ENCODE measurements at regions of chr16 and their contacts with region 1.

Region 1: GRCh38 chr16:3880623-3881498 is at the start of gene CREBBP:
- DNase-seq: peak; percentile 95
- ATAC-seq: peak; percentile 84
- H3K4me3 ChIP-seq: peak within 1 kb of the TSS; percentile 70 to 94 (median 74)
- H3K4me3 Mint-ChIP-seq: peak within 1 kb of the TSS; percentile 97
- H3K27ac ChIP-seq: peak within 1 kb of the TSS; percentile 50 to 81
- H3K27ac Mint-ChIP-seq: peak within 1 kb of the TSS; percentile 94
- H3K4me1 ChIP-seq: peaks cover 29 to 34% of the 10 kb centered on the region in 2 donors
- H3K4me1 Mint-ChIP-seq: peaks cover 36% of the 10 kb centered on the region
- H3K27me3 ChIP-seq: no peaks in the 10 kb centered on the region
- H3K27me3 Mint-ChIP-seq: peaks cover 6% of the 10 kb centered on the region
- CTCF ChIP-seq: no peak
- total RNA-seq, gene CREBBP: 205 and 206 TPM in 2 replicates

Region 2: GRCh38 chr16:3282730-3283524 is 597.9 kb before region 1 on chr16 and contains the start of gene ZNF263:
- CTCF ChIA-PET with region 1: no interaction called
- POLR2A ChIA-PET with region 1: no interaction called
- intact Hi-C with region 1: loop called (anchors 2 kb)
- DNase-seq: peak; percentile 96
- ATAC-seq: peak; percentile 89
- H3K4me3 ChIP-seq: peak within 1 kb of the TSS; percentile 78 to 100 (median 95)
- H3K4me3 Mint-ChIP-seq: peak within 1 kb of the TSS; percentile 97
- H3K27ac ChIP-seq: peak within 1 kb of the TSS; percentile 97 to 99
- H3K27ac Mint-ChIP-seq: peak within 1 kb of the TSS; percentile 98
- H3K4me1 ChIP-seq: peaks cover 22 to 30% of the 10 kb centered on the region in 2 donors
- H3K4me1 Mint-ChIP-seq: peaks cover 37% of the 10 kb centered on the region
- H3K27me3 ChIP-seq: no peaks in the 10 kb centered on the region
- H3K27me3 Mint-ChIP-seq: no peaks in the 10 kb centered on the region
- CTCF ChIP-seq: no peak
- total RNA-seq, gene ZNF263: 43.0 and 46.0 TPM in 2 replicates

Region 3: GRCh38 chr16:3520413-3520812 is 360.4 kb before region 1 on chr16:
- CTCF ChIA-PET with region 1: no interaction called
- POLR2A ChIA-PET with region 1: no interaction called
- intact Hi-C with region 1: loop called (anchors 10 kb)
- DNase-seq: no peak
- ATAC-seq: no peak
- H3K4me3 ChIP-seq: no peak overlapping the region
- H3K4me3 Mint-ChIP-seq: no peak overlapping the region
- H3K27ac ChIP-seq: no peak overlapping the region
- H3K27ac Mint-ChIP-seq: no peak overlapping the region
- H3K4me1 ChIP-seq: no peaks in the 10 kb centered on the region
- H3K4me1 Mint-ChIP-seq: no peaks in the 10 kb centered on the region
- H3K27me3 ChIP-seq: no peaks in the 10 kb centered on the region
- H3K27me3 Mint-ChIP-seq: no peaks in the 10 kb centered on the region
- CTCF ChIP-seq: no peak

Region 4: GRCh38 chr16:3690470-3690928 is 190.4 kb before region 1 on chr16:
- CTCF ChIA-PET with region 1: interaction called, 14 read pairs
- POLR2A ChIA-PET with region 1: interaction called, 4 read pairs
- intact Hi-C with region 1: loop called (anchors 1 kb)
- DNase-seq: peak; percentile 86
- ATAC-seq: peak; percentile 98
- H3K4me3 ChIP-seq: no peak overlapping the region
- H3K4me3 Mint-ChIP-seq: no peak overlapping the region
- H3K27ac ChIP-seq: no peak overlapping the region
- H3K27ac Mint-ChIP-seq: peak overlapping the region; percentile 50
- H3K4me1 ChIP-seq: peaks cover 3 to 9% of the 10 kb centered on the region in 2 donors
- H3K4me1 Mint-ChIP-seq: peaks cover 7% of the 10 kb centered on the region
- H3K27me3 ChIP-seq: no peaks in the 10 kb centered on the region
- H3K27me3 Mint-ChIP-seq: no peaks in the 10 kb centered on the region
- CTCF ChIP-seq: peak; percentile 96

Region 5: GRCh38 chr16:3717235-3718018 is 163.4 kb before region 1 on chr16 and contains the start of gene TRAP1:
- CTCF ChIA-PET with region 1: no interaction called
- POLR2A ChIA-PET with region 1: no interaction called
- intact Hi-C with region 1: loop called (anchors 1 kb)
- DNase-seq: peak; percentile 93
- ATAC-seq: peak; percentile 97
- H3K4me3 ChIP-seq: peak within 1 kb of the TSS; percentile 58 to 98 (median 90)
- H3K4me3 Mint-ChIP-seq: peak within 1 kb of the TSS; percentile 91
- H3K27ac ChIP-seq: peak within 1 kb of the TSS; percentile 69 to 91
- H3K27ac Mint-ChIP-seq: peak within 1 kb of the TSS; percentile 87
- H3K4me1 ChIP-seq: peaks cover 11 to 14% of the 10 kb centered on the region in 2 donors
- H3K4me1 Mint-ChIP-seq: peaks cover 15% of the 10 kb centered on the region
- H3K27me3 ChIP-seq: no peaks in the 10 kb centered on the region
- H3K27me3 Mint-ChIP-seq: no peaks in the 10 kb centered on the region
- CTCF ChIP-seq: no peak
- total RNA-seq, gene TRAP1: 51.1 and 54.4 TPM in 2 replicates

Region 6: DNA sequence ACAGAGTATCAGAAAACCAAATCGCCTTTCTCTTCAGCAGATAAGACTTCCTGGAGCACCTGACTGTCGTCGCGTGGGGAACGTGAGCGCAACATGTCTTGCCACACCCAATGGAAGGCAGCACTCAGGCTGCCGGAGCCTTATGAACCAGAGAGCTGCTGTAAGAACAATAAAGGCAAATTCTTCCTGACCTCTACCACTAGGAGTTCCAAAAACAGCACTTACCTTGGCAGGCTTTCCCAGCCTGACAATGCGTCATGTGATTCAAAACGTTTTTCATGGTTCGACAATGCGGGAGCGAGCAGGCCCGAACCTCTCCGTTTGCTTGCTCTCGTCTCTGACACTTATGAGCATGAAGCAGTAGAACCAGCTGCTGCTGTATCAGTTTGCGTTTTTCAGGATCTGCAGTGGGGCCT is 87.7 kb before region 1 on chr16:
- CTCF ChIA-PET with region 1: interaction called, 10 read pairs
- POLR2A ChIA-PET with region 1: no interaction called
- intact Hi-C with region 1: no loop called
- DNase-seq: no peak
- ATAC-seq: no peak
- H3K4me3 ChIP-seq: no peak overlapping the region
- H3K4me3 Mint-ChIP-seq: no peak overlapping the region
- H3K27ac ChIP-seq: no peak overlapping the region
- H3K27ac Mint-ChIP-seq: no peak overlapping the region
- H3K4me1 ChIP-seq: peaks cover 33% of the 10 kb centered on the region in 2 donors
- H3K4me1 Mint-ChIP-seq: peaks cover 57% of the 10 kb centered on the region
- H3K27me3 ChIP-seq: no peaks in the 10 kb centered on the region
- H3K27me3 Mint-ChIP-seq: no peaks in the 10 kb centered on the region
- CTCF ChIP-seq: no peak

Measured in B cell (primary cell).